Left lung (tissue), 14 donors: ENCODE measurements at regions of chr2 and their contacts with region 1.

Region 1: DNA sequence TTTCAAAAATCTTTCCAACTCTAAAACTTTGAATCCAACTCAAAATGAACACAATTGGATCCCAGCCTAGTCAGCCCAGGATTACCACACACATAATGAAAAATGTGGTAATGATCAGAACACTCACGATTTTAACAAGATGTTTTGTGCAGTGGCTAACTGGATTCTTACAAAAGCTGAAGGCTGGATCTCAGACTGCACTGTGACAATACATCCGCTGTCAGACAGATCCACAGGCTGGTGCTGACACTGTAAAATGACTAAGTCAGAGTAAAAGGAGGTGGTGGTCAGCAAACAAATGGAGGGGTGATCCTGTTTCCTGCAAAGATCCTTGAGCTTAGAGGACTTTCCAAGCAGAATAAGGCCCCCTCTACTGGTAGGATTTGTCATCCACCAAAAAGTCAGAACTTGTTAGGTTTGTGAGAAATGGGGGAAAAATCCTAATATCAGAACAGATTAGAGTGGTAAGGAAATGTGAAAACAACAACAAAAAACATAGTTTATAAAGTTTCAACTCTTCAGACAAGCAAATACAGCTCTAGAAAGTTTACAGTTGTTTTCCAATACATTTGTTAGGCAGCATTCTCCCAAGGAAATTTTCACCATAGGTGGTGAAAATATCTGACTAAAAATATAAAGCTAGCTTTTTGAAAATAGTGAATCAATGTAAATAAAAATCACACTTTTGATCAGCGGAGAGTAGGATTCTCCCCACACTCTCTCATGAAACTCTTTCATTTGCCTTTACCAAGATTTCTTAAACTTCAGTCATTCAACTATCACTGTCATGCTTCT is 211.9 kb downstream of the AGPS start:
- DNase-seq: peak in 2 of 4 donors; percentile 83 to 86
- ATAC-seq: peak; percentile 86
- H3K4me3 ChIP-seq: no peak overlapping the region
- H3K27ac ChIP-seq: no peak overlapping the region
- H3K4me1 ChIP-seq: no peaks in the 10 kb centered on the region
- H3K27me3 ChIP-seq: no peaks in the 10 kb centered on the region
- CTCF ChIP-seq: peak; percentile 35 to 37

Region 2: GRCh38 chr2:177164584-177165052 is 439.9 kb before region 1 on chr2:
- intact Hi-C with region 1: no loop called
- DNase-seq: peak; percentile 83 to 87 (median 85)
- ATAC-seq: peak; percentile 92
- H3K4me3 ChIP-seq: peak overlapping the region; percentile 6 to 31
- H3K27ac ChIP-seq: peak overlapping the region; percentile 80 to 89
- H3K4me1 ChIP-seq: peaks cover 6 to 24% of the 10 kb centered on the region in 2 donors
- H3K27me3 ChIP-seq: no peaks in the 10 kb centered on the region
- CTCF ChIP-seq: peak; percentile 96 to 99

Region 3: DNA sequence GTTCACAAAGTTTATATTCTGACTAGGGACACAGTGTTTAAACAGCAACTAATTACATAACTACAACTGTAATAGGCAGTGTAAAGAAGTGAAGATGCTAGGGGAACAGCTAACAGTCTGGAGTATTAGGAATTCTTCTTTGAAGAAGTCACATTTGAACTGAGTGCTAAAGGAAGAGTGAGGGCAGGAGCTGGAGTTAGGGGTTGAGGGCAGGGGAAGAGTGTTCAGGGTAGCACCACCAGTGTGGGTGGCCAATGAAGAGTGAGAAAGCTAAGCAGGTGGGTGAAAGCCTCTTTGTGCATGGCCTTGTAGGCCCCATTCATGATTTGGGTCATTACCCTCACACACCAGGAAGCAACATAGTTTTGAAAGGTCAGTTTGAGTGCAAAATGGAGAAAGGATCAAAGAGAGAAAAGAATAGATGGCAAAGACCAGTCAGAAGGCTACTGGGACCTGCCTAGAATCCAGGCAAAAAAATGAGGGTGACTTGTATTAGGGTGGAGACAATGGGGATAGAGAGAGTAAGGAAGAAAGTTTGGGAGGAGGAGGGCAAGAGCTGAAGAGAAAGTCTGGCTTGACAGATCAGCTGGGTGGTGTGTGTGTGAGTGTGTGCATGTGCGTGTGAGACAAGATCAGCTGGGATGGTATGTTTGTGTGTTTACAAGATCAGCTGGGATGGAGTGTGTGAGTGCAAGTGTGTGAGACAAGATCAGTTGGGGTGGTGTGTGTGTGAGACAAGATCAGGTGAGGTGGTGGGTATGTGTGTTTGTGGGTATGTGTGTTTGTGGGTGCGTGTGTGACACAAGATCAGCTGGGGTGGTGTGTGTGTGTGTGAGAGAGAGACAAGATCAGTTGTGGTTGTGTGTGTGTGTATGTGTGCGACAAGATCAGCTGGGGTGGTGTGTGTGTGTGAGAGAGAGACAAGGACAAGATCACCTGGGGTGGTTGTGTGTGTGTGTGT is 255.5 kb before region 1 on chr2:
- intact Hi-C with region 1: loop called in 1 of 2 experiments (anchors 10 kb)
- DNase-seq: no peak
- ATAC-seq: no peak
- H3K4me3 ChIP-seq: no peak overlapping the region
- H3K27ac ChIP-seq: no peak overlapping the region
- H3K4me1 ChIP-seq: peaks cover 8 to 19% of the 10 kb centered on the region in 2 donors
- H3K27me3 ChIP-seq: no peaks in the 10 kb centered on the region
- CTCF ChIP-seq: no peak

Region 4: DNA sequence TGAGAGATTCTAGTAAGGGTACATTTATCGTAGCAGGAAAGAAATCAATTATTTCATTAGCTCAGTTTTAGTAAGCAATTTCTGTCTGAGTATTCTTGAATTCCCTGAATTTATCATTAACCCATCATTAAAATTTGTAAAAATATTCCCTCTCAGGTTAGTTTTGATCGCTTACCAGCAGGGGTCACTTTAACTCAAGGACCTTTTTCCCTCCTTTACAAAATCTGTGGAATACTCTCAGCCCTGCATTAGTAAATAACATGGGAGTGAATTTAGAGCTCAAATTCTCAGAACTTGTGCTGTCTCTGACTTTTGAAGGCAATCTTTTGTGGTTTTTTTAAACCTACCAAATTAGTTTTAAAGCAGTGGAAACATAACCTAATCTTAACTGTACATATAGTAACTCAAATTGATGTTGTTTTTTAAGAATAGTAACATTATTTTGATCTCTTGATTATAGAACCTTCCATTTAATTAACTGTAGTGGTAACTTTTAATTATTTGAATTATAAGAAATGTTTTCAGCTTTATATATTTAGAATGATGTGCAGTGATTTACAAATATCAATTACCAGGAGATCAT is 114.7 kb before region 1 on chr2:
- intact Hi-C with region 1: loop called in 1 of 2 experiments (anchors 5 kb)
- DNase-seq: peak in 2 of 4 donors; percentile 31 to 61
- ATAC-seq: peak; percentile 61
- H3K4me3 ChIP-seq: no peak overlapping the region
- H3K27ac ChIP-seq: no peak overlapping the region
- H3K4me1 ChIP-seq: no peaks in the 10 kb centered on the region
- H3K27me3 ChIP-seq: no peaks in the 10 kb centered on the region
- CTCF ChIP-seq: peak in 1 of 2 donors; percentile 51